Activated T-helper 1 cell treated with anti-CD3 and anti-CD28 coated beads, Interleukin-12 subunit alpha, Interleukin-12 subunit beta, Interleukin-2, Interleukin-4 antibody, amounts not matched to agents 30 ng/mL and 10 ng/mL and 1 ng/mL, durations not matched to agents 14 hours and 24 hours and 36 hours (primary cell): ENCODE measurements at regions of chr2 and their contacts with region 1.

Region 1: GRCh38 chr2:174748948-174749347 is 15.3 kb downstream of the CHRNA1 start:
- DNase-seq: peak; percentile 55
- H3K4me3 Mint-ChIP-seq: no peak overlapping the region
- H3K27ac Mint-ChIP-seq: no peak overlapping the region
- H3K4me1 Mint-ChIP-seq: peaks cover 44% of the 10 kb centered on the region
- H3K27me3 Mint-ChIP-seq: peaks cover 7% of the 10 kb centered on the region

Region 2: GRCh38 chr2:174365571-174365970 is 383.4 kb before region 1 on chr2:
- intact Hi-C with region 1: no loop called
- DNase-seq: no peak
- H3K4me3 Mint-ChIP-seq: no peak overlapping the region
- H3K27ac Mint-ChIP-seq: no peak overlapping the region
- H3K4me1 Mint-ChIP-seq: no peaks in the 10 kb centered on the region
- H3K27me3 Mint-ChIP-seq: no peaks in the 10 kb centered on the region

Region 3: DNA sequence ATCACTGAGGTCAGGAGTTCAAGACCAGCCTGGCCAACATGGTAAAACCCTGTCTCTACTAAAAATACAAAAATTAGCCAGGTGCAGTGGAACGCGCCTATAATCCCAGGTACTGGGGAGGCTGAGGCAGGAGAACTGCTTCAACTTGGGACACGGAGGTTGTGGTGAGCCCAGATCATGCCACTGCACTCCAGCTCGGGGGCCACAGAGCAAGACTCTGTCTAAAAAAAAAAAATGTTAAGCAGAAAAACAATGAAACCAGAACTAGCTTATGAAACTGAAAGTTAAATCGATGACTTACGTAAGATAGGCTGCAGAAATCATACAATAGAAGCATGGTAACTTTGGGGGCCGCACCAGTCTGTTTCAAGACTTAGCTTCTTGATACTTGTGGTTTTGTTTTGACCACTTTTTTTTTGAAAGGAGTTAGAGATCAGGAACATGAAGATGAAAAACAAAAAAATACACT is 256.0 kb before region 1 on chr2:
- intact Hi-C with region 1: loop called (anchors 2 kb)
- DNase-seq: peak; percentile 58
- H3K4me3 Mint-ChIP-seq: peak overlapping the region; percentile 76
- H3K27ac Mint-ChIP-seq: peak overlapping the region; percentile 92
- H3K4me1 Mint-ChIP-seq: peaks cover 76% of the 10 kb centered on the region
- H3K27me3 Mint-ChIP-seq: no peaks in the 10 kb centered on the region

Region 4: DNA sequence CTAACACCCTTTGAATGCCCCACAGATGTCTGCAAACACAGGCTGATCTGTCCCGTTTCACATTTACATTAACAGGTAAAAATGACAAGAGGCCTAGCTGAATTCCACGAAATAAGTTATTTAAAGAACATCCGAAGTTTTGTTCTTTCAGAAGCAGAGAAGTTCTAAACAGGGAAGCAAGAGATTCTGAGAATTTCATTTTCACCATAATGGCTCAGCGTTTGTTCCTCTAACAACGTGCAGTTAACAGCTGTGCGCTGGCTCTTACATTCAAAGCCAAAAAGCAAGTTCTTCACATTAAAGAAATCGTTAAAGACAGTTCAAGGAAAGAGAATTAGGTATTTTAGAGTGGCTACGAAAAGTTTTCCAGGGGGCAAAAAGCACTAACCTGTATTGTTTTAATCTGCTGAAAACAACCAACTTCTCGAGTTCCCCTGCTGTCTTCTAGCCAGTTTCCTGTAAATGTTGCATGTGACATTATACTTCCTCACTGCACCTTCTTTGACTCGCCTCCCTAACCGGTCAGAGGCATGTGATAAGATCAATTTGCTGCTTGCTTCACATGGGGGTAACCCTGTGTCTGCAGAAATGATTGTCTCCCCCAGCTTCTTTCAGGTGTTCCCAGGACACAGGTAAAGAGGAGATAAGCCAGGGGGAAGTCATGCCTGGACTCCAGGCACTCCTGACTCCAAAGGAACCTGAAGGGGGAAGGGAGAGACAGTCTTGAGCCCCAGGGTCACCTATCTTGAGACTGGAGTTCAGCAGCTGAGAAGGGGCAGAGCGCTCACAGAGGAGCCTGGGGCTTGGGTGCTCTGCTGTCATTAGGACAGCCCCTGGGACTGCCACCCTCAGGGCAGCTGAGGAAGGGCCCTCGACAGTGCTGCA is 114.6 kb before region 1 on chr2:
- intact Hi-C with region 1: loop called (anchors 2 kb)
- DNase-seq: peak; percentile 49
- H3K4me3 Mint-ChIP-seq: peak overlapping the region; percentile 94
- H3K27ac Mint-ChIP-seq: peak overlapping the region; percentile 98
- H3K4me1 Mint-ChIP-seq: peaks cover 84% of the 10 kb centered on the region
- H3K27me3 Mint-ChIP-seq: no peaks in the 10 kb centered on the region

Region 5: DNA sequence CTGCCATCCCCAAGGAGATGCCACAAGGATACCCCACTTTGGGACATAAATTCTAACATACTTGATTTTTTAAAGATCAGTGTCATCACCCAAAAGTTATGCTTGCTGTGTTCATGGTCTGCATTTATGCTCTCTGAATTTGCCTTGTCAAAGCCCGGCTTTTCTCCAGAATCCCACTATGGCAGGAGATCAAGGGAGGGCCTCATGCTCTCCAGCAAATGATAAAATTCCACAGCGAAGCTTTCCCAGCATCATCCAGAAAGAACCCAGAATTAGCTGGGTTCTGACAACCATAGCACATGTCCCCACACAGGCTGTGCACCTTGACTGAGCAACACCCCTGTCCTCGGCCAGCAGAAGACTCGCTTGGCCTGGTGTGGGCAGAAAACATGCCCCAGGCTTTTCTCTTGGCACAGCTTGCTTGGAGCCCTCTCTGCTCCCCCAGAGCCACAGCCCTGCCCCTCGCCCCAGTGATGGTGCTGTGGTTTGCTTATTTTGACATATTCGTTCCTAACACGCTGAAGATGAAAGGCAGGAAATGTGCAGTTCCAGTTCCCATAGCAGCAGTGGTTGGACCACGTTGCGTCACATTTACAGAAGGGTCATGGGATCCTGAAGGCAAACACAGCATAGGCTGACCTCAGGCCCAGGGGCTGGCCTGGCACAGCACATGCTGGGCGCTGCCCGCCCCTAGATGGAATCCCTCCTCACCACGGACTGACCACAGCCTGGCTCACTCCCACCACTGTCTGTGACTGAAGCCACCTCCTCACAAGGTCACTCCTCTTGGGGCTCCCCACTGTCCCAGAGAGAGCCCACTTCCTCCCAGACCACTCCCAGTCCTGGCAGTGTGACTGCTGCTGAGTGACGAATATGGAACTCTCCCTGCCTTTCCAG is 29.4 kb after region 1 on chr2:
- intact Hi-C with region 1: loop called (anchors 1 kb)
- DNase-seq: peak; percentile 76
- H3K4me3 Mint-ChIP-seq: peak overlapping the region; percentile 58
- H3K27ac Mint-ChIP-seq: peak overlapping the region; percentile 83
- H3K4me1 Mint-ChIP-seq: peaks cover 50% of the 10 kb centered on the region
- H3K27me3 Mint-ChIP-seq: peaks cover 2% of the 10 kb centered on the region

Region 6: GRCh38 chr2:174846941-174847938 is 98.3 kb after region 1 on chr2:
- intact Hi-C with region 1: loop called (anchors 2 kb)
- DNase-seq: no peak
- H3K4me3 Mint-ChIP-seq: no peak overlapping the region
- H3K27ac Mint-ChIP-seq: no peak overlapping the region
- H3K4me1 Mint-ChIP-seq: peaks cover 20% of the 10 kb centered on the region
- H3K27me3 Mint-ChIP-seq: no peaks in the 10 kb centered on the region

Region 7: GRCh38 chr2:174925046-174925784 is 176.3 kb after region 1 on chr2:
- intact Hi-C with region 1: no loop called
- DNase-seq: no peak
- H3K4me3 Mint-ChIP-seq: no peak overlapping the region
- H3K27ac Mint-ChIP-seq: no peak overlapping the region
- H3K4me1 Mint-ChIP-seq: no peaks in the 10 kb centered on the region
- H3K27me3 Mint-ChIP-seq: no peaks in the 10 kb centered on the region

Region 8: GRCh38 chr2:175004980-175005732 is 256.2 kb after region 1 on chr2 and contains the start of gene CHN1:
- intact Hi-C with region 1: loop called (anchors 1 kb)
- DNase-seq: peak; percentile 47
- H3K4me3 Mint-ChIP-seq: peak within 1 kb of the TSS; percentile 85
- H3K27ac Mint-ChIP-seq: peak within 1 kb of the TSS; percentile 55
- H3K4me1 Mint-ChIP-seq: no peaks in the 10 kb centered on the region
- H3K27me3 Mint-ChIP-seq: peaks cover 70% of the 10 kb centered on the region
- total RNA-seq, gene CHN1: 3.4 and 4.8 TPM in 2 replicates

Region 9: DNA sequence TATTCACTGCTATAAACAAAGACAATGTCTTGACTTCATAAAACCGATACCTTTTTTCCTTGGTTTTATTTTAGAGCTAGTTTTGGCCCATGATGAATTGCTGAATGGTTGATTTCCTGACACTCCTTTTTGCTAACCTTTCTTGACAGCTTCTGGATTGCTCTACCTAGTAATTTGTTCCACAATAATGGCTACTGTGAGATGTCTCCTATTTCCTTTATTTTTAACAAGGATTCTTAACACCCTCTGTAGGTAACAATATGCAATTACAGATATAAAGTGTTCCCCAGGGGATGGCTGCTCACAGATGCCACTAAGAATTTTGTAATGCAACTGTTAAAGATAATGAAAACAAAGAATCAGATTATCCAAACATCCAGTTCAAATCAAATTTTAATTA is 533.3 kb after region 1 on chr2:
- intact Hi-C with region 1: loop called (anchors 1 kb)
- DNase-seq: no peak
- H3K4me3 Mint-ChIP-seq: no peak overlapping the region
- H3K27ac Mint-ChIP-seq: no peak overlapping the region
- H3K4me1 Mint-ChIP-seq: no peaks in the 10 kb centered on the region
- H3K27me3 Mint-ChIP-seq: peaks cover 11% of the 10 kb centered on the region